ENCODE measurements at regions of chr14 and their contacts with region 1.

Region 1: GRCh38 chr14:65824285-65824977 is 411.9 kb downstream of the FUT8 start:
- DNase-seq: peak; percentile 42 to 71
- H3K4me3 ChIP-seq: no peak overlapping the region
- H3K27ac ChIP-seq: no peak overlapping the region
- H3K4me1 ChIP-seq: no peaks in the 10 kb centered on the region
- H3K27me3 ChIP-seq: peaks cover 0 to 35% of the 10 kb centered on the region in 2 donors
- CTCF ChIP-seq: peak; percentile 77 to 91

Region 2: GRCh38 chr14:64986578-64987571 is 837.6 kb before region 1 on chr14 and contains the start of gene FNTB:
- intact Hi-C with region 1: loop called (anchors 10 kb)
- DNase-seq: peak; percentile 95 to 97
- H3K4me3 ChIP-seq: peak within 1 kb of the TSS; percentile 68 to 72
- H3K27ac ChIP-seq: peak within 1 kb of the TSS; percentile 83 to 89
- H3K4me1 ChIP-seq: peaks cover 0 to 15% (median 11%) of the 10 kb centered on the region in 4 donors
- H3K27me3 ChIP-seq: no peaks in the 10 kb centered on the region
- CTCF ChIP-seq: peak; percentile 61 to 79

Region 3: DNA sequence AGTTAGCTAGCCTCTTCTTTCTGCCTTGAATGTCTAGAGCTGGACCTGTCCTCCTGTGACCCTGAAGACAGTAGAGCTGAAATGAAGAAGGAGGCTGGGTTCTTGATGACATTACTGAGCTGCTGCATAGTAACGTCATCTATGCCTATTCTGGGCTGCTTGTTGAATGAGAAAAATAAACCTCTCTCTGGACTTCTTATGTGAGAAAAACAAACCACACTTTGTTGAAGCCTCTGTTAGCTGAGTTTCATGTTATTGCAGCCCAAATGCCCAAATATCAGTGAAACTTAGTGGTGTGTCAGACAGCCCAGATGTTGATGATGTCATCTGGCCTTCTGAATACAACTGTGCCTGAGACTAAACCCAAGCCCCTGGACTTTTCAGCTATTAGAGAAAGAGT is 655.1 kb before region 1 on chr14:
- intact Hi-C with region 1: loop called (anchors 5 kb)
- DNase-seq: no peak
- H3K4me3 ChIP-seq: no peak overlapping the region
- H3K27ac ChIP-seq: no peak overlapping the region
- H3K4me1 ChIP-seq: peaks cover 0 to 9% (median 3%) of the 10 kb centered on the region in 4 donors
- H3K27me3 ChIP-seq: peaks cover 0 to 19% of the 10 kb centered on the region in 2 donors
- CTCF ChIP-seq: no peak

Region 4: DNA sequence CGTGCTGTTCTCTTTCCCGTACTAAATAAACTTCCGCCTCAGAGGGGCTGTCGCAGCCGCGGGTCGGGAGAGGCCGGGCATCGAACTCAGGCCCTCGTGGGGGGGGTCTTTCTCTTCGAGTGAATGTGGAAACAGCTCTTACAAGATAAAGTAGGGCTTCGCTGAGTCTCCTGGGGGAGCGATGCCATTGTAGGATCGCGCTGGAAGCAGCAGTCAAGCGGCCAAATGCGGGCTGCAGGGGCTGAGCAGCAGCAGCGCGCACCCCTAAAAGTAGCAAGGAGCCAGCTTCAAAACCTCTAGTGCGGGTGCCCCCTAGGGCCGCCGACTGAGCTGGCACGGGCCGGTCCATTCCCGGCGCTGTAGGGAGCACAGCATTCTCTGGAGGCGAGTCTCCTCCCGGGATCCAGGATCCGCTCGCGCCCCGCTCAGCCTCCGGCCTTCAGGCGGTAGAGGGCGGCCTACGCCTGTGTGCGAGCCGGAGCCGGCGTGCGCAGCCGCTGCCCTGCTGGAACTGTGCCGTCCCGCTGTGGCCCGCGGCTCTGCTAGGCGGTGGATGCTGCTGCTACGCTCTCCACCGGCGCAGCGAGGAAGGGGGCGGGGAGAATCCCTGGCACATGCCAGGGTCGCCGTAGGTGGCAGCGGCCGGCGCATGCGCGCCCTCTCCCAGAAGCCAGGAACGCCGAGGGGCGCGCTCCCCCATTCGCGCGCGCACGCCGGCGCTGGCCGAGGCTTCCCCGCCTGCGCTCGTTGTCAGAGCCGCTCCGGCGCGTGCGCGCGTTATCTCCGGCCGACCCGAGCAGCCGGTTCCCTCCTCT is 412.2 kb before region 1 on chr14 and contains the start of gene FUT8:
- intact Hi-C with region 1: loop called (anchors 5 kb)
- DNase-seq: peak; percentile 94 to 97
- H3K4me3 ChIP-seq: peak within 1 kb of the TSS; percentile 79 to 88
- H3K27ac ChIP-seq: peak within 1 kb of the TSS; percentile 94 to 95
- H3K4me1 ChIP-seq: peaks cover 0 to 9% (median 4%) of the 10 kb centered on the region in 4 donors
- H3K27me3 ChIP-seq: no peaks in the 10 kb centered on the region
- CTCF ChIP-seq: peak; percentile 30 to 47

Measured in tibial artery (tissue), 4 donors.